K562 (cell line): ENCODE measurements at regions of chr12 and their contacts with region 1.

Region 1: GRCh38 chr12:28164644-28165275 is 25.5 kb upstream of the CCDC91 start:
- DNase-seq: no peak
- ATAC-seq: no peak
- H3K4me3 ChIP-seq: no peak overlapping the region
- H3K27ac ChIP-seq: no peak overlapping the region
- H3K4me1 ChIP-seq: no peaks in the 10 kb centered on the region
- H3K27me3 ChIP-seq: no peaks in the 10 kb centered on the region
- CTCF ChIP-seq: no peak
- EP300 ChIP-seq: no peak
- POLR2A ChIP-seq: no peak
- RAD21 ChIP-seq: no peak

Region 2: DNA sequence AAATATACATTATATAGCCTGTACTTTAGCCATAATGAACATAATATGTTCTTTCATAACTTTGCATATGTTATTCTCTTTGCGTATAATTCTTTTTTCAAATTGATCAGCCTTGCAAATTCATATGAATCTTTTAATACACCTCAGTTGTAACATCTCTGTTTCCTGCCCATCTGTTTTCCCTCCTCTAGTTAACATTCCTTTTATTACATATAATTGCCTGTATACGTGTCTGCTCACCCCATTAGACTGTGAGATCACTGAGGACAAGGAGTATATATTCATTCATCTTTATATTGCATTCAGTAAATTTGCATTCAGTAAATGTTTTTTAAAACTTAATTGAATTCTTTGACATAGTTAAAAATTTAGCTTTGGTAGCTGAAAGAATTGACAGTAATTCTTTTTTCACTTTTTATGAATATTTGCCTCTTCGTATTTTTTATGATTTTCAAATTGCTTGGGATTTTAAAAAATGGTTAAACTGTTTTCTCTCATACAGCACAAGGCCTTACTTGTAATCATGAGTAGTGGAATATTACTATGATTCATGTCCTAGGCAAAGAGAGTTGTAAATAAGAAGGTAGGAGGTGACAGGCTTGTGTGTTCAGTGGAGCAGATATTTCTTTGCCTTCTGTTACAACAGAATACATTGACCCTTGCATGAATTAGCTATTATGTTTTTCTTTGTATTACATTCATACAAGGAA is 417.5 kb before region 1 on chr12:
- CTCF ChIA-PET with region 1: no interaction called
- POLR2A ChIA-PET with region 1: no interaction called
- in situ Hi-C with region 1: loop called (anchors 10 kb)
- intact Hi-C with region 1: no loop called
- DNase-seq: no peak
- ATAC-seq: no peak
- H3K4me3 ChIP-seq: no peak overlapping the region
- H3K27ac ChIP-seq: no peak overlapping the region
- H3K4me1 ChIP-seq: peaks cover 5 to 8% of the 10 kb centered on the region in 2 experiments; a peak in 3 of 5 replicates
- H3K27me3 ChIP-seq: no peaks in the 10 kb centered on the region
- CTCF ChIP-seq: no peak
- EP300 ChIP-seq: no peak
- POLR2A ChIP-seq: no peak
- RAD21 ChIP-seq: no peak

Region 3: DNA sequence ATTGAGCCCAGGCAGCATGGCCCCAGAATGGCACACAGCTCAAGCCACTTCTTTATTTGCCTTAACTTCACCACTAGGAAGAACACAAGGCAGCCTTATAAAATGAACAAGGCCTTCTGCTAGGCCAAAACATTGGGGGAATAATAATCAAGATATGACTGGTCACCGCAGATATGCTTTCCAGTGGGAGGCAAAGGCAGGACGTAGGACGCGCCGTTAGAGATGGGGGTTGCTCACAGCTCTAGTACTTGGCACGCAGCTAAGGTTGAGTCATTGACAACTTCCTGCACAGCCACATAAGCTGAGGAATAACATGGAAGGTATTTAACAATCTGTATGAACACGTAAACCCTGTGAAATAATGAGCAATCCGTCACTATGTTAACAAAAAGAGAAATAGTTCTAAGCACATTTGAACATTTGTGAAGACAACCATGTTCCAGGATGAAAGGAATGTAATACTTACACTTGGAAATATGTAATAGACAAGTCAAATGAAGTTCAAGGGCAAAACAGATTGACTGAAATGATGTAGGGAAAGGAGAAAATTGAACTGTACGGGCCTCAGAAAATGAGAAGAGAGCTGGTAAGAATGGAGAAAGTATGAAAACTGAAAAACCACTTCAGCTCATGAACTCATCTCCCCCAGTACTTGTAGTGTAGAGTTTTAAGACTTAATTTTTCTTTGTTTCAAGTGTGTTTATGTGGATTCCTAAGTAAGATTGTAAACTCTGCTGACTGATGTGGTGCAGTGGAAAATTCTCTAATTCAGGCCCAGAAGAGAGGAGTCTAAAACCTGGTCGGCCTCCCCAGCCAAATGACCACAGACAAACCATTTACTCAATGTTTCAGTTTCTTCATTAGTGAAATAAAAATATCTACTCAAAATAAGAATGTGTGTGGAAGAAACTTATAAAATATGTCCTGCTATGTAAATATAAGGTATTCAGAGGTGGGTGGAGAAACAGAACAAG is 33.8 kb before region 1 on chr12:
- CTCF ChIA-PET with region 1: no interaction called
- POLR2A ChIA-PET with region 1: no interaction called
- in situ Hi-C with region 1: no loop called
- intact Hi-C with region 1: no loop called
- DNase-seq: peak; percentile 53 to 96 (median 70)
- ATAC-seq: peak; percentile 95
- H3K4me3 ChIP-seq: no peak overlapping the region
- H3K27ac ChIP-seq: peak overlapping the region; percentile 90
- H3K4me1 ChIP-seq: peaks cover 12 to 66% of the 10 kb centered on the region in 2 experiments
- H3K27me3 ChIP-seq: no peaks in the 10 kb centered on the region
- CTCF ChIP-seq: peak in 1 of 3 experiments; percentile 17; a peak in 2 of 6 replicates
- EP300 ChIP-seq: peak; percentile 95
- POLR2A ChIP-seq: peak; percentile 63; the same call in 1 of the 2 replicates
- RAD21 ChIP-seq: peak; percentile 7 to 30; a peak in 2 of 4 replicates